Mammary epithelial cell (primary cell): ENCODE measurements at regions of chr6 and their contacts with region 1.

Region 1: DNA sequence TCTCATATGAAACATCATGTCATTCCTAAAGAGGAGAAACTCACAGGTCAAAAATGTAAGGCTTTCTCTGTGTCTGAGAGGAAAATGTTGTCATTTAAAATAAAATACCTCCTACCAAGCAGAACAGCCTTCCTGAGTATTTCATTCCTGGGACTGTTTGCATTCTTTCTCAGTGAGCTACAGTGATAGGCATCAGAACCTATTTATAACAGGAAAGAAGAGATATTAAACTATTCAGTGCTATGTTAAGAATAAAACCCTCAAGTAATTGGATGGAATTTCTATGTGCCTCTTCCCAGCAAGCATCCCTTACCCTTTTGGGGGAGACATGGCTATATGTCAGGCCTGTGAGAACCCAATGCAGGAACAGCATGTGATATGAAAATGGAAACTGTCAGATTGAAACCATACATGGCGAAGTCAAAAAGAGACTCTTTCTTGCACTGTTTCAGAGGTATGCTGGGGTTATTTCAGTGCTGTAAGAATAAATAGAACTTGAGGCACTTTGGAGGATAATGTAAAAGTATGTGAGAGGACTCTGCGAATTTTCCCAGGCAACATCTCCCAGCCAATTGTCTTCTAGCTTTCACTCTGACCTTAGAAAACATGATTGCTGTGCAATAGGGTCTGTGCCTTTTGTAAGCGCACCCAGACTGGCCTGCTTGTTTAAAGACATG is 133.8 kb upstream of the CCN2 start:
- DNase-seq: peak; percentile 69
- H3K4me3 ChIP-seq: no peak overlapping the region
- H3K27ac ChIP-seq: no peak overlapping the region
- H3K4me1 ChIP-seq: peaks cover 5% of the 10 kb centered on the region
- H3K27me3 ChIP-seq: no peaks in the 10 kb centered on the region
- CTCF ChIP-seq: no peak

Region 2: GRCh38 chr6:132063738-132064137 is 21.2 kb before region 1 on chr6:
- CTCF ChIA-PET with region 1: interaction called, 32 read pairs
- dilution Hi-C with region 1: no loop called
- in situ Hi-C with region 1: no loop called
- intact Hi-C with region 1: no loop called
- DNase-seq: peak; percentile 83
- H3K4me3 ChIP-seq: no peak overlapping the region
- H3K27ac ChIP-seq: peak overlapping the region; percentile 22
- H3K4me1 ChIP-seq: peaks cover 29% of the 10 kb centered on the region
- H3K27me3 ChIP-seq: no peaks in the 10 kb centered on the region
- CTCF ChIP-seq: no peak